Panc1 (cell line): ENCODE measurements at regions of chr1 and their contacts with region 1.

Region 1: GRCh38 chr1:14390816-14391215 is 207.7 kb upstream of the KAZN start:
- DNase-seq: no peak
- ATAC-seq: no peak
- H3K4me3 ChIP-seq: no peak overlapping the region
- H3K27ac ChIP-seq: no peak overlapping the region
- H3K4me1 ChIP-seq: no peaks in the 10 kb centered on the region
- H3K27me3 ChIP-seq: no peaks in the 10 kb centered on the region
- CTCF ChIP-seq: no peak

Region 2: DNA sequence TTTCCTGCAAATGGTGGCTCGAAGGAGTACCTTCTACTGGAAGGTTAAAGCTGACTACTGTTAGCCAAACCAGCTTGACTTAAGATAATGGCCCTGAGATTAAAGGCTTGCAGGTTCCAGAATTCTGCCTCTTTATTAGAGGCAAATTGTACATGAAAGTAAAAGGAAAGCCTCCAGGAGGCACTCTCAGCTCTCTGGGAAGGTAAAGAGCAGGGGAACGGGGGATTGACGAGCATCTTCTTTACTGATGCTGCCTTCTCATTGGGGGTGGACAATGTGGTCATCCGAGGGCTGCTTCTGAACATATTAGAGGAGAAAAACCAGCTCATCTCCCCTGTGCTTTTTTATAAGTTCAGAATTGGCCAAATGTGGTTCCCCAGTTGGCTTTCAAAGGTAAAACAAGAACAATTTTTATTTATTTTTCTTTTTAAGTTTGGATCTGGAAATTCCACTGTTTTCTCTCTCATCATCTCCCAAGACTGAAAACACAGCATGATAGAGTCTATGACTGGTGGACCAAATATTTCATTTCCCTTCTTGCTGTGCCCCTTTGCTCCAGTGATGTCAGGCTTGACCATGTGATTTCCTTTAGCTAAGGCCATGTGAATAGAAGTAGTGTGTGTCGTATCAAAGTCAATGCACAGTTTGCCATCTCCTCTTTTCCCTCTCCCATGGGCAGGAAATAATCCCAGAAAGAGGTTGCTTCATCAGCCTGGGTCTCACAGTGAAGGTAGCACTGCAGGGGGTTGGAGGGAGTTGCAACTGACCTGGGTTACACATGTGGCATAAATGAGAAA is 398.1 kb before region 1 on chr1:
- CTCF ChIA-PET with region 1: no interaction called
- POLR2A ChIA-PET with region 1: no interaction called
- in situ Hi-C with region 1: no loop called
- intact Hi-C with region 1: no loop called
- DNase-seq: no peak
- ATAC-seq: no peak
- H3K4me3 ChIP-seq: no peak overlapping the region
- H3K27ac ChIP-seq: no peak overlapping the region
- H3K4me1 ChIP-seq: no peaks in the 10 kb centered on the region
- H3K27me3 ChIP-seq: no peaks in the 10 kb centered on the region
- CTCF ChIP-seq: no peak

Region 3: DNA sequence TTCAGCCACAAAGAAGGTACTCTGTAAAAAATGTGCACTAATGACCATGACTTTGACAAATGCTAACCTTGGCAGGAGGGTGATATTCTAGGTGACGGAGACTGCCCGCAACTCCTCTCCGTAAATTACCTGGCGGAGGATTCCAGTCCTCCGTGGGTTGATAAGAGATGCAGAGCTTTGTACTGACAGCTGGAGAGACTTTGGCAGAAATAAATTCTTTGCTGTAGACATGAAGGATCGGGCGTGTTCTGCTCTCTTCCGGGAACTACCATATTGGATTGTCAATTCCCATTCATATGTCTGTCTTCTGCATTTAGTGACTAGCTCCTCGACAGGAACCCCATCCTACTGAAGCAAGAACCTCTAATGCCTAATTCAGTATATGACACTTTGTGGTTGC is 49.4 kb after region 1 on chr1:
- CTCF ChIA-PET with region 1: interaction called, 11 read pairs
- POLR2A ChIA-PET with region 1: no interaction called
- in situ Hi-C with region 1: no loop called
- intact Hi-C with region 1: no loop called
- DNase-seq: no peak
- ATAC-seq: no peak
- H3K4me3 ChIP-seq: no peak overlapping the region
- H3K27ac ChIP-seq: no peak overlapping the region
- H3K4me1 ChIP-seq: no peaks in the 10 kb centered on the region
- H3K27me3 ChIP-seq: no peaks in the 10 kb centered on the region
- CTCF ChIP-seq: no peak

Region 4: DNA sequence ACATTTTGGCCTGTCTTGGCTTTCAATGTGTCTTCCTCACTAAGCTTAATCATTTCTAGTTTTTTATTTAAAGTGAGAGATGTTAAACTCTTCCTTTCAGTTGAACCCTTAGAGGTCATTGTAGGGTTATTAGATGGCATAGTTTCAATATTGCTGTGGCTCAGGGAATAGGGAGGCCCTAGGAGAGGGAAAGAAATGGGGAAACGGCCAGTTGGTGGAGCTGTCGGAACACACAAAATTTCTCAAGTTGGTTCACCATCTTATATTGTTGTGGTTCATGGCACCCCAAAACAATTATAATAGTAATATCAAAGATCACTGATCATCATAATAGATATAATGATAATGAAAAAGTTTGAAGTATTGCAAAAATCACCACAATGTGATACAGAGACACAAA is 176.2 kb after region 1 on chr1:
- CTCF ChIA-PET with region 1: no interaction called
- POLR2A ChIA-PET with region 1: no interaction called
- in situ Hi-C with region 1: no loop called
- intact Hi-C with region 1: no loop called
- DNase-seq: no peak
- ATAC-seq: no peak
- H3K4me3 ChIP-seq: no peak overlapping the region
- H3K27ac ChIP-seq: no peak overlapping the region
- H3K4me1 ChIP-seq: no peaks in the 10 kb centered on the region
- H3K27me3 ChIP-seq: no peaks in the 10 kb centered on the region
- CTCF ChIP-seq: peak; percentile 40; the same call in 1 of the 2 replicates